ENCODE measurements at regions of chr2 and their contacts with region 1.

Region 1: GRCh38 chr2:68943581-68944568 is 8.8 kb downstream of the GKN2 start:
- DNase-seq: peak; percentile 66 to 79
- ATAC-seq: peak; percentile 95 to 96
- H3K4me3 ChIP-seq: no peak overlapping the region
- H3K27ac ChIP-seq: peak overlapping the region; percentile 68 to 87
- H3K4me1 ChIP-seq: peaks cover 5% of the 10 kb centered on the region; the same call in 2 of the 3 replicates
- CTCF ChIP-seq: peak; percentile 91
- EP300 ChIP-seq: no peak; a peak in 1 of 5 replicates
- POLR2A ChIP-seq: no peak
- RAD21 ChIP-seq: peak; percentile 91 to 93

Region 2: GRCh38 chr2:68824831-68825230 is 119.0 kb before region 1 on chr2:
- CTCF ChIA-PET with region 1: no interaction called
- POLR2A ChIA-PET with region 1: no interaction called
- DNase-seq: no peak
- ATAC-seq: no peak
- H3K4me3 ChIP-seq: no peak overlapping the region
- H3K27ac ChIP-seq: no peak overlapping the region; a peak in 1 of 6 replicates
- H3K4me1 ChIP-seq: peaks cover 17% of the 10 kb centered on the region
- CTCF ChIP-seq: no peak
- EP300 ChIP-seq: no peak
- POLR2A ChIP-seq: no peak
- RAD21 ChIP-seq: no peak

Region 3: GRCh38 chr2:68971591-68972231 is 27.8 kb after region 1 on chr2:
- CTCF ChIA-PET with region 1: interaction called, 17 read pairs
- POLR2A ChIA-PET with region 1: no interaction called
- DNase-seq: peak; percentile 76 to 98
- ATAC-seq: peak; percentile 96
- H3K4me3 ChIP-seq: no peak overlapping the region
- H3K27ac ChIP-seq: peak overlapping the region; percentile 83 to 90
- H3K4me1 ChIP-seq: peaks cover 72% of the 10 kb centered on the region
- CTCF ChIP-seq: no peak
- EP300 ChIP-seq: peak; percentile 95 to 98
- POLR2A ChIP-seq: no peak
- RAD21 ChIP-seq: peak; percentile 14 to 31; a peak in 3 of 5 replicates

Region 4: GRCh38 chr2:68994864-68995263 is 51.0 kb after region 1 on chr2:
- CTCF ChIA-PET with region 1: interaction called, 17 read pairs
- POLR2A ChIA-PET with region 1: no interaction called
- DNase-seq: no peak
- ATAC-seq: peak; percentile 36 to 40; a peak in 3 of 6 replicates
- H3K4me3 ChIP-seq: no peak overlapping the region
- H3K27ac ChIP-seq: no peak overlapping the region
- H3K4me1 ChIP-seq: peaks cover 19% of the 10 kb centered on the region
- CTCF ChIP-seq: no peak
- EP300 ChIP-seq: no peak
- POLR2A ChIP-seq: no peak
- RAD21 ChIP-seq: no peak

Region 5: DNA sequence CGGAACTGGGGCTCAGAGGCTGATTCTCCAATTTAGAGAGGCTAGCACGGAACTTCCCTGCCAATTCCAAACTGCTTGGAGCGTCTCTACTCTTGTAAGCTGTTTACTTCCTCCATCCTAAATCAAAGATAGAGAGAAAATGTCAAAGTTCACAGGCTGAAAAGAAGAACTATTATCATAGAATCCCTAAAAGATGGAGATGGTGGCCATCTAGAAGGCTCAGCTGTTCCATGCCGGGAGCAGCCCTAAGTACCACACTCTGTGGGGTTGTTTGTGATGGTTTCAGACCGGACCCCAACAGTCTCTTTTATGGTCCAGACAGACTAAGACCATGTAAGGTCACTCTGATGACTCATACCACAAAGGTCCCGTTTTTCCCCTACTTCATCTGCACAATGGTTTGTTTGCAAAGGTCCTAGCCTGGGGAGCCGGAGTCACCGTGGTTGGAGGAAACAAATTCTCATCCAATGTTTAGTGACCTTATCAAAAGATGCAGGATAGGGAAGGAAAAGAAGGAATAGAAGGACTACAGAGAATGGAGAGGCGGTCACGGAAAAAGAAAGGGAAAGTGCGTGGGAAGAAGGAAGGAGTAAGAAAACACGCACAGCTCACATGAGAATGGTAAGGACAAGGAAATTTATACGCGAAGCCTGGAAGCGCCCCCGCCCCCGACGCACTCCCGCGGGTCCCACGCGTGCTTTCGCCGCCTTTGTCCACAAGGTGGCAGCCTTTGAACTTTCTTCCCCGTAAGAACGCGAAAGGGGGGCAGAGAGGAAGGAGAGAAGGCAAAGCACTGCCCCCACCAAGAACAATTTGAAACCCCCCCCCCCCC is 68.7 kb after region 1 on chr2:
- CTCF ChIA-PET with region 1: interaction called, 29 read pairs
- POLR2A ChIA-PET with region 1: interaction called, 13 read pairs
- DNase-seq: peak; percentile 74 to 85
- ATAC-seq: peak; percentile 55 to 65
- H3K4me3 ChIP-seq: peak overlapping the region; percentile 85
- H3K27ac ChIP-seq: peak overlapping the region; percentile 90 to 95
- H3K4me1 ChIP-seq: peaks cover 35% of the 10 kb centered on the region
- CTCF ChIP-seq: peak; percentile 89
- EP300 ChIP-seq: peak in 1 of 2 experiments; percentile 31; a peak in 1 of 5 replicates
- POLR2A ChIP-seq: no peak
- RAD21 ChIP-seq: peak; percentile 80 to 96

Region 6: DNA sequence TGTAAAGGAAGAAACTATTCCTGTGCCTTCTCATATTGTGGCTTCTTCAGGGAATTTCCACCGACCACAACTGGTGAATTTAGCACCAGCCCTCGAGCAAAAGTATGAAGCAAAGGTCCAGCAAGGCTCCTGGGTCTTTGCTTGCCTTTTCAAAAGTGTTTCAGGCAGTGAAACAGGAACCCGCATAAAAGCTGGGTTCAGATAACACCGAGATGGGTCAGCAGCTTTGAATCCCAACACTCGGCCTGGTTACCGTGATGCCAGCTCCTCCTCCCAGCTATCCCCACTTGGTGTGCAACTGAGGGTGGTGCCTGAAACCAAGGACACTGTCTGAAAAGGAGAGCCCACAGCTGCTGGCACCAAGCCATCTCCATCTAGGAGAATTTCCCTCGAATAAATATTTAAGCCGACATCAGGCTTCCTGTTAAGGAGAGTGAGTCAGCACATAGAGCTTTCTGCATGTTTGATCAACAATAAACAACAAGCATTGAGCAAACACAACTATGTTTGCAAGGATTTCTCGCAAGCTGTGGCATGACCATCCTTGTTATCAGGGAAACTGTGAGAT is 138.6 kb after region 1 on chr2:
- CTCF ChIA-PET with region 1: interaction called, 23 read pairs
- POLR2A ChIA-PET with region 1: no interaction called
- DNase-seq: peak; percentile 80 to 97
- ATAC-seq: peak; percentile 87 to 90
- H3K4me3 ChIP-seq: no peak overlapping the region
- H3K27ac ChIP-seq: peak overlapping the region; percentile 71 to 86
- H3K4me1 ChIP-seq: peaks cover 57% of the 10 kb centered on the region
- CTCF ChIP-seq: no peak
- EP300 ChIP-seq: peak; percentile 85 to 86; a peak in 3 of 5 replicates
- POLR2A ChIP-seq: no peak
- RAD21 ChIP-seq: peak; percentile 36 to 57

Measured in A549 (cell line).